CD8-positive, alpha-beta T cell (primary cell): ENCODE measurements at regions of chr1 and their contacts with region 1.

Region 1: GRCh38 chr1:63679076-63679475 is 85.9 kb downstream of the PGM1 start:
- DNase-seq: no peak
- ATAC-seq: no peak
- H3K4me3 ChIP-seq: no peak overlapping the region
- H3K4me3 Mint-ChIP-seq: no peak overlapping the region
- H3K27ac ChIP-seq: no peak overlapping the region
- H3K27ac Mint-ChIP-seq: no peak overlapping the region
- H3K4me1 ChIP-seq: no peaks in the 10 kb centered on the region
- H3K4me1 Mint-ChIP-seq: no peaks in the 10 kb centered on the region
- H3K27me3 ChIP-seq: no peaks in the 10 kb centered on the region
- H3K27me3 Mint-ChIP-seq: peaks cover 2% of the 10 kb centered on the region
- CTCF ChIP-seq: no peak

Region 2: DNA sequence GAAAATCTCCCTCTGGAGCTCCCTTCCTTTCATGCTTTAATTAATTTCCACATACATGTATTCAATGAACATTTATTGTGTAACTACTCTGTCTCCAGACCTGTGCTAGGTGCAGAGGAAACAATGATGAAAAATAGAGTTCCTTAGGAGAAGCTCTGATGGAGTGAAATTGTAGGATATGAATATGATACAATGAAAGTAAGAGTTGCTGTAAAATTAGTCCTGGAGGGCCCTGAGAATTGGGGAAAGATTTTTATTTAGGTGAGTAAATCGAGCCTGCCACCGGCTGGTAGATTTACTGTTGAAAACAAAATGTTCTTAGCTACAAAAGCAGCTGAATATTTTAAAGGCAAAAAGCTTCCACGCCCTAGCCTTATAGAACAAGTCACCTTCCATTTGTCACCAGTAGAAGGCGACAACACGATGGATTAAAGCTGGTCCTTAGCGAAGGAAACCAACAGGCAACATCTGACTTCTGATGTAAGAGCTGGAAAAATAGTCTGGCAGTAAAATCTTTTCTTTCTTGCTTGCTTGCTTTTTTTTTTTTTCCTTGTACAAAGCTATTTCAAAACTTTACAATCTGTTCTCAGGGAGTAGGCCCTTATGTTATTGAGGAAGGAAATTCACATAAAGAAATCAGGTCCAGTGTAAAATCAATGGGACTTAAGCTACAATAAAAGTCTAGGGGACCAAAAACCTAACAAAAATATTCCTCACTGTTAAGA is 12.8 kb after region 1 on chr1:
- CTCF ChIA-PET with region 1: interaction called, 10 read pairs
- POLR2A ChIA-PET with region 1: no interaction called
- intact Hi-C with region 1: no loop called
- DNase-seq: peak in 4 of 9 experiments; percentile 1 to 42 (median 21)
- ATAC-seq: no peak
- H3K4me3 ChIP-seq: no peak overlapping the region
- H3K4me3 Mint-ChIP-seq: no peak overlapping the region
- H3K27ac ChIP-seq: no peak overlapping the region
- H3K27ac Mint-ChIP-seq: no peak overlapping the region
- H3K4me1 ChIP-seq: no peaks in the 10 kb centered on the region
- H3K4me1 Mint-ChIP-seq: peaks cover 2% of the 10 kb centered on the region
- H3K27me3 ChIP-seq: no peaks in the 10 kb centered on the region
- H3K27me3 Mint-ChIP-seq: peaks cover 1% of the 10 kb centered on the region
- CTCF ChIP-seq: peak; percentile 45

Region 3: DNA sequence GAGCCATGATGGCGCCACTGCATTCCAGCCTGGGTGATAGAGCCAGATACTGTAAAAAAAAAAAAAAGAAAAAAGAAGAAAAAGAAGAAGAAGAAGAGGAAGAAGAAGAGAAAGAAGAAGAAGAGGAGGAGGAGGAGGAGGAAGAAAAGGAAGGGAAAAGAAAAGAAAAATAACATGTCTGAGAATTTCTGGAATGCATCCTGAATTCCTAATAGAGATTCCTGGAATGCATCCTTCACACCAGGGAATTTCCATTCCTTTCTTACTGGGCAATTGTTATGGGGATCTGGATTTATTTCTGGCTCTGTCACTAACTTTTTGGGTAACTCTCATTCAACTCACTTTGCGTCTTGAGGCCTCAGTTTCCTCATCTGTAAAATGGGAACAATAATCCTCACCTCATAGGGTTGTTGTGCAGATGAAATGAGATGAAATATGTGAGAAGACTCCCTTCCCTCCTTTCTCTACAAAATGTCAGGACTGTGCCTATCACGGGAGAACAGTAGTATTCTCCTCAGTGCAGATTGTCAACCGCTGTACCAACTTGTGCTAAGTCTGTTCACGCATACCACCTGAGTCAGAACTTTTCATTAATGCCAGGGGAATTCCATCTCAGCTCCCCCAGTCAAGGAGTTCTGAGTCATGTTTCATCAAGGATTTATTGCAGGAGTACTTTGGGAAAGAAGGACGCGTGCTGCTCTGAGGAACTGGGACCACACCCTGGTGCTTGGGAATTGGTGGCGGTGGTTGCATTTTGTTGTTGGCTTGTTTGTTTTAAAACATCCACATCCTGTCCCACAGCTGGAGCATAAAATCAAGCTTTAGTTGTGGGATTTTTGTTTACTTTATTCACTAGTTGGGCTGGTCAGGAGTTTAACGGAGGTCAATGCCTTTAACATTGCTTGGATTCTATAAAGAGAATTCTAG is 52.3 kb after region 1 on chr1:
- CTCF ChIA-PET with region 1: no interaction called
- POLR2A ChIA-PET with region 1: no interaction called
- intact Hi-C with region 1: no loop called
- DNase-seq: no peak
- ATAC-seq: no peak
- H3K4me3 ChIP-seq: no peak overlapping the region
- H3K4me3 Mint-ChIP-seq: no peak overlapping the region
- H3K27ac ChIP-seq: no peak overlapping the region
- H3K27ac Mint-ChIP-seq: no peak overlapping the region
- H3K4me1 ChIP-seq: no peaks in the 10 kb centered on the region
- H3K4me1 Mint-ChIP-seq: no peaks in the 10 kb centered on the region
- H3K27me3 ChIP-seq: no peaks in the 10 kb centered on the region
- H3K27me3 Mint-ChIP-seq: peaks cover 3% of the 10 kb centered on the region
- CTCF ChIP-seq: no peak

Region 4: GRCh38 chr1:63975481-63975880 is 296.4 kb after region 1 on chr1:
- CTCF ChIA-PET with region 1: no interaction called
- POLR2A ChIA-PET with region 1: no interaction called
- intact Hi-C with region 1: no loop called
- DNase-seq: no peak
- ATAC-seq: no peak
- H3K4me3 ChIP-seq: no peak overlapping the region
- H3K4me3 Mint-ChIP-seq: no peak overlapping the region
- H3K27ac ChIP-seq: no peak overlapping the region
- H3K27ac Mint-ChIP-seq: no peak overlapping the region
- H3K4me1 ChIP-seq: no peaks in the 10 kb centered on the region
- H3K4me1 Mint-ChIP-seq: no peaks in the 10 kb centered on the region
- H3K27me3 ChIP-seq: no peaks in the 10 kb centered on the region
- H3K27me3 Mint-ChIP-seq: no peaks in the 10 kb centered on the region
- CTCF ChIP-seq: no peak